CD8-positive, alpha-beta T cell (primary cell): ENCODE measurements at regions of chr17 and their contacts with region 1.

Region 1: GRCh38 chr17:75182569-75183450 is at the start of gene SUMO2:
- DNase-seq: peak; percentile 89 to 98 (median 95)
- ATAC-seq: peak; percentile 77
- H3K4me3 ChIP-seq: peak within 1 kb of the TSS; percentile 68 to 82
- H3K4me3 Mint-ChIP-seq: peak within 1 kb of the TSS; percentile 92
- H3K27ac ChIP-seq: peak within 1 kb of the TSS; percentile 95
- H3K27ac Mint-ChIP-seq: peak within 1 kb of the TSS; percentile 98
- H3K4me1 ChIP-seq: peaks cover 28% of the 10 kb centered on the region
- H3K4me1 Mint-ChIP-seq: peaks cover 46% of the 10 kb centered on the region
- H3K27me3 ChIP-seq: no peaks in the 10 kb centered on the region
- H3K27me3 Mint-ChIP-seq: no peaks in the 10 kb centered on the region
- CTCF ChIP-seq: no peak
- total RNA-seq, gene SUMO2: 192 to 203 TPM

Region 2: GRCh38 chr17:74748529-74749365 is 434.1 kb before region 1 on chr17 and contains the start of gene NHERF1:
- CTCF ChIA-PET with region 1: no interaction called
- POLR2A ChIA-PET with region 1: no interaction called
- intact Hi-C with region 1: no loop called
- DNase-seq: peak; percentile 83 to 98 (median 92)
- ATAC-seq: peak; percentile 83
- H3K4me3 ChIP-seq: peak within 1 kb of the TSS; percentile 94 to 98
- H3K4me3 Mint-ChIP-seq: peak within 1 kb of the TSS; percentile 98
- H3K27ac ChIP-seq: peak within 1 kb of the TSS; percentile 60 to 80
- H3K27ac Mint-ChIP-seq: peak within 1 kb of the TSS; percentile 96
- H3K4me1 ChIP-seq: peaks cover 61% of the 10 kb centered on the region
- H3K4me1 Mint-ChIP-seq: peaks cover 67% of the 10 kb centered on the region
- H3K27me3 ChIP-seq: no peaks in the 10 kb centered on the region
- H3K27me3 Mint-ChIP-seq: no peaks in the 10 kb centered on the region
- CTCF ChIP-seq: no peak
- total RNA-seq, gene NHERF1: 72.5 to 73.7 TPM

Region 3: GRCh38 chr17:74987418-74987908 is 195.3 kb before region 1 on chr17 and contains the start of gene CDR2L:
- CTCF ChIA-PET with region 1: no interaction called
- POLR2A ChIA-PET with region 1: no interaction called
- intact Hi-C with region 1: loop called in 1 of 2 experiments (anchors 1 kb)
- DNase-seq: peak; percentile 82 to 95 (median 92)
- ATAC-seq: peak; percentile 97
- H3K4me3 ChIP-seq: peak within 1 kb of the TSS; percentile 48 to 50
- H3K4me3 Mint-ChIP-seq: peak within 1 kb of the TSS; percentile 83
- H3K27ac ChIP-seq: no peak within 1 kb of the TSS
- H3K27ac Mint-ChIP-seq: no peak within 1 kb of the TSS
- H3K4me1 ChIP-seq: peaks cover 10% of the 10 kb centered on the region
- H3K4me1 Mint-ChIP-seq: peaks cover 15% of the 10 kb centered on the region
- H3K27me3 ChIP-seq: peaks cover 0 to 5% of the 10 kb centered on the region in 2 experiments
- H3K27me3 Mint-ChIP-seq: peaks cover 2% of the 10 kb centered on the region
- CTCF ChIP-seq: no peak
- total RNA-seq, gene CDR2L: 0.14 to 0.27 TPM

Region 4: GRCh38 chr17:75046582-75047289 is 136.1 kb before region 1 on chr17 and contains the starts of genes ATP5PD and KCTD2:
- CTCF ChIA-PET with region 1: no interaction called
- POLR2A ChIA-PET with region 1: no interaction called
- intact Hi-C with region 1: loop called in 1 of 2 experiments (anchors 1 kb)
- DNase-seq: peak; percentile 81 to 97 (median 93)
- ATAC-seq: peak; percentile 91
- H3K4me3 ChIP-seq: peak within 1 kb of the TSS; percentile 99
- H3K4me3 Mint-ChIP-seq: peak within 1 kb of the TSS; percentile 99
- H3K27ac ChIP-seq: peak within 1 kb of the TSS; percentile 93 to 97
- H3K27ac Mint-ChIP-seq: peak within 1 kb of the TSS; percentile 98
- H3K4me1 ChIP-seq: peaks cover 21% of the 10 kb centered on the region
- H3K4me1 Mint-ChIP-seq: peaks cover 54% of the 10 kb centered on the region
- H3K27me3 ChIP-seq: no peaks in the 10 kb centered on the region
- H3K27me3 Mint-ChIP-seq: no peaks in the 10 kb centered on the region
- CTCF ChIP-seq: no peak
- total RNA-seq, gene ATP5PD: 69.9 to 71.6 TPM
- total RNA-seq, gene KCTD2: 29.4 to 31.7 TPM

Region 5: GRCh38 chr17:75131280-75132017 is 51.4 kb before region 1 on chr17 and contains the start of gene NT5C:
- CTCF ChIA-PET with region 1: interaction called, 3 read pairs
- POLR2A ChIA-PET with region 1: interaction called, 4 read pairs
- intact Hi-C with region 1: loop called in 1 of 2 experiments (anchors 1 kb)
- DNase-seq: peak in 8 of 9 experiments; percentile 43 to 82 (median 66)
- ATAC-seq: peak; percentile 79
- H3K4me3 ChIP-seq: peak within 1 kb of the TSS; percentile 80 to 84
- H3K4me3 Mint-ChIP-seq: peak within 1 kb of the TSS; percentile 86
- H3K27ac ChIP-seq: peak within 1 kb of the TSS; percentile 64 to 83
- H3K27ac Mint-ChIP-seq: peak within 1 kb of the TSS; percentile 77
- H3K4me1 ChIP-seq: peaks cover 8% of the 10 kb centered on the region
- H3K4me1 Mint-ChIP-seq: peaks cover 15% of the 10 kb centered on the region
- H3K27me3 ChIP-seq: no peaks in the 10 kb centered on the region
- H3K27me3 Mint-ChIP-seq: no peaks in the 10 kb centered on the region
- CTCF ChIP-seq: peak; percentile 19
- total RNA-seq, gene NT5C: 19.3 to 20.4 TPM

Region 6: DNA sequence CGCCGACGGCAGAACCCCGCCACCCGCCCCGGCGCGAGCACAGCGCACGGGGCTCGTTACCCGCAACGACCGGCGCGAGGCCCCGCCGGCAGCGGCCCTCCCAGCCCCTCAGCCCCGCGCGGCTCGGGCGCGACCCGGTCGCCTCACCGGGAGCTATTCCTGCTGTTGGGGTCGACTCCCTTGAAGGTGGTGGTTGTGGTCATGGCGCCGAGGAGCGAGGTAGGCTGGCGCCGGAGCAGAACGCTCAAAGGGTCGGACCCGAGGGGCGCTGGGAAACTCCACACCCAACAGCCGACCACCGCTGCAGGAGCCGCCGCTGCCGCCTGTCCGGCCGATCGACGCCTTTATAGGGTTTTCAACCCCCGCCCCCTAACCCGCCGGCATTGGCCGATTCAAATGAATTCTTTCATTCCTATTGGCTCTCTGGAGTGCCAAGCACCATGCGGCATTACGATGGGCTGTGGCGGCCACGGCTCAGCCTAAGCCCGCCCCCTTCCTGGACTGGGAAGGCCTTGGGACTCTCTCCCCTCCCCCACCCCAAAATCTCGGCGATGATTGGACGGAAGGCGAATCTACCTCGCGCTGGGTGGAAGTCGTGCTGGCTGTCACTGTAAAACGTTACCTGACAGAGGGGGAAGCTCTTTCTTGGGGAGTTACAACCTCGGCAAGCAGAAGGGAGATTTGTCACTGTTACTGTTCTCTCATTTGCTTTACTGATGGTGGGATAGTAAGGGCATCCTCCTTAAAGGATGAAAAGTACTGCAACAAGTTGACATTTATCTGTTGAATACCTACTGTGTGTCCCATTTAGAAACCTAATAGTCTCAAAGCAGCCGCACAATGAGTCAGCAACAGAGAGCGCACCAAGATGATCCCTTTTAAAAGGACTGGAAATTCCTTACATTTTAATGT is 28.4 kb before region 1 on chr17 and contains the start of gene JPT1:
- CTCF ChIA-PET with region 1: interaction called, 3 read pairs
- POLR2A ChIA-PET with region 1: interaction called, 4 read pairs
- intact Hi-C with region 1: loop called (anchors 1 kb)
- DNase-seq: peak; percentile 94 to 99 (median 97)
- ATAC-seq: peak; percentile 97
- H3K4me3 ChIP-seq: peak within 1 kb of the TSS; percentile 88 to 94
- H3K4me3 Mint-ChIP-seq: peak within 1 kb of the TSS; percentile 91
- H3K27ac ChIP-seq: peak within 1 kb of the TSS; percentile 78 to 81
- H3K27ac Mint-ChIP-seq: peak within 1 kb of the TSS; percentile 87
- H3K4me1 ChIP-seq: peaks cover 23% of the 10 kb centered on the region
- H3K4me1 Mint-ChIP-seq: peaks cover 31% of the 10 kb centered on the region
- H3K27me3 ChIP-seq: no peaks in the 10 kb centered on the region
- H3K27me3 Mint-ChIP-seq: no peaks in the 10 kb centered on the region
- CTCF ChIP-seq: no peak
- total RNA-seq, gene JPT1: 15.1 to 17.3 TPM

Region 7: GRCh38 chr17:75205037-75205792 is 22.4 kb after region 1 on chr17 and contains the start of gene NUP85:
- CTCF ChIA-PET with region 1: interaction called, 46 read pairs
- POLR2A ChIA-PET with region 1: interaction called, 18 read pairs
- intact Hi-C with region 1: loop called (anchors 1 kb)
- DNase-seq: peak; percentile 84 to 96 (median 92)
- ATAC-seq: peak; percentile 93
- H3K4me3 ChIP-seq: peak within 1 kb of the TSS; percentile 85 to 93
- H3K4me3 Mint-ChIP-seq: peak within 1 kb of the TSS; percentile 94
- H3K27ac ChIP-seq: peak within 1 kb of the TSS; percentile 70 to 89
- H3K27ac Mint-ChIP-seq: peak within 1 kb of the TSS; percentile 99
- H3K4me1 ChIP-seq: peaks cover 19% of the 10 kb centered on the region
- H3K4me1 Mint-ChIP-seq: peaks cover 23% of the 10 kb centered on the region
- H3K27me3 ChIP-seq: no peaks in the 10 kb centered on the region
- H3K27me3 Mint-ChIP-seq: no peaks in the 10 kb centered on the region
- CTCF ChIP-seq: no peak
- total RNA-seq, gene NUP85: 57.4 to 65.3 TPM

Region 8: DNA sequence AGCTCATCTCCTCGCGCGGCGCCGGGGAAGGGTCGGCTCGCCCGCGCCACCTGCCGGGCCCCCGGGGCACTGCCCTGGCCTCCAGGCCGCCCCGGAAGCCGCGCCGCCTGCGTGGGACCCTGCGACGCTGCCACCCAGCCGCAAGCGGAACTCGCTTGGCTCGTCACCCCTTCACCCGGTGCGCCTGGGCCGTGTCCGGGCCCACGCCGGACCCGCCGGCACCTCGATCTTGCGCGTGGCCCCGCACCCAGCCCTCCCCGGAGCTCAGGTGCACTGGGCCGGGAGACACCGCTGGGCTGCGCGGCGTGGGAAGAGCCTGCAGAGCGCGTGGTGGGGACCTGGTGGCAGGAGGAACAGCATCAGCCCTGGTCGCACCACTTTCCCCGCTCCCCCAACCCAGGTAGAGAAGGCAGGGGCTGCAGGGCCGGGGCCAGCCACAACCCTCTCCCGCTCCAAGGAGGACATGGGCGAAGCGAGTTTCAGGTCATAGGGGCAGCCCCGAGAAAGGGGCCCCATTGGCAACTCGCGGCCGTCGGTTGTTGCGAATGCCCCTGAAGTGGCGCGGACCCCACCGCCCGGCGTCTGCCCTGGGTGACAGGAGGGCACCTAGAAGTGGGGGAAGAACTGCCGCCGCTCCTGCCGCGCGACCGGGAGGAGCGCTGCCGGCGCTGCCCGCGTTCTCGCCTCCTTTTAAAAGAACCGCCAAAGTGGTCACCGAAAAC is 88.6 kb after region 1 on chr17:
- CTCF ChIA-PET with region 1: no interaction called
- POLR2A ChIA-PET with region 1: interaction called, 4 read pairs
- intact Hi-C with region 1: loop called in 1 of 2 experiments (anchors 1 kb)
- DNase-seq: peak; percentile 75 to 94 (median 88)
- ATAC-seq: peak; percentile 92
- H3K4me3 ChIP-seq: peak overlapping the region; percentile 84 to 93
- H3K4me3 Mint-ChIP-seq: peak overlapping the region; percentile 81
- H3K27ac ChIP-seq: peak overlapping the region; percentile 82 to 91
- H3K27ac Mint-ChIP-seq: peak overlapping the region; percentile 84
- H3K4me1 ChIP-seq: peaks cover 18% of the 10 kb centered on the region
- H3K4me1 Mint-ChIP-seq: peaks cover 25% of the 10 kb centered on the region
- H3K27me3 ChIP-seq: no peaks in the 10 kb centered on the region
- H3K27me3 Mint-ChIP-seq: no peaks in the 10 kb centered on the region
- CTCF ChIP-seq: peak; percentile 65

Region 9: GRCh38 chr17:75707131-75707571 is 524.3 kb after region 1 on chr17:
- CTCF ChIA-PET with region 1: no interaction called
- POLR2A ChIA-PET with region 1: no interaction called
- intact Hi-C with region 1: no loop called
- DNase-seq: no peak
- ATAC-seq: no peak
- H3K4me3 ChIP-seq: no peak overlapping the region
- H3K4me3 Mint-ChIP-seq: no peak overlapping the region
- H3K27ac ChIP-seq: no peak overlapping the region
- H3K27ac Mint-ChIP-seq: peak overlapping the region; percentile 10
- H3K4me1 ChIP-seq: no peaks in the 10 kb centered on the region
- H3K4me1 Mint-ChIP-seq: no peaks in the 10 kb centered on the region
- H3K27me3 ChIP-seq: no peaks in the 10 kb centered on the region
- H3K27me3 Mint-ChIP-seq: no peaks in the 10 kb centered on the region
- CTCF ChIP-seq: no peak